ENCODE measurements at regions of chr3 and their contacts with region 1.

Region 1: DNA sequence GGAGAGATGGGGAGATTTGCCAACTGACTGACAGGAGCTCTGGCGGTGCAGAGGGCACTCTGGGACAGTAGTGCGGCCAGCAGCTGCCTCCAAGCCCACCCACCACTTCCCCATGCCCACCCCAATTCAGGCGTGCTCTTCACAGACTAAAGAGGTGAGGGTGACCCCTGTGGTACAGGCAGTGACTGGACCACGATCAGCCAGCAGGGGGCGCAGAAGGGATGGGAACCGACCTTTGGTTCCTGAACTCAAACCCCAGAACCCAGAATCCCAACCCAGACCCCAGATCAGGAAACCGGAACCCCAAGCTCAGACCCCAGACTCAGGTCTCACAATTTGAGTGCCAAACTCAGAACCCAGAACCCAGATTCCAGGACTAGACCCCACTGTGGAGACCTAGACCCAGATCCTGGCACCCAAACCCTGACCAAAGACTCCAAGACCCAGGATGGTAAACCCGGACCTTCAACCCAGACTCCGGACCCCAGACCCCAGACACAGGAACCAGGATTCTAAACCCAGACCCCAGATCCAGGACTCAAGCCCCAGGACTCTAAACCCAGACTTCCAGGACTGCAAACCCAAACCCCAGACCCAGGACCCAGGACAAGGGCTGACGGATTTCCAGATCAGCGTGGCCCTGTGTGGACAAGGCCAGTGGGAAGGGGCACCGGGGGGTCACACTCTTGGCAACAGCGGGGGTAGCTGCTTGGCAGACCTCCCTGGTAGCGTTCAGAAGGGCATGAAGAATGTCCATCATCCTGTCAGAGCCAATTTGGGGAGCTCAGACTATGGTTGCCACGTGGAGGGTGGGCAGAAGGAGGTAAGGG is 3.7 kb upstream of the MYL3 start:
- DNase-seq: peak; percentile 88 to 98
- ATAC-seq: peak; percentile 84
- H3K4me3 ChIP-seq: no peak overlapping the region
- H3K27ac ChIP-seq: no peak overlapping the region
- H3K4me1 ChIP-seq: peaks cover 0 to 2% of the 10 kb centered on the region in 2 donors
- H3K27me3 ChIP-seq: no peaks in the 10 kb centered on the region

Region 2: DNA sequence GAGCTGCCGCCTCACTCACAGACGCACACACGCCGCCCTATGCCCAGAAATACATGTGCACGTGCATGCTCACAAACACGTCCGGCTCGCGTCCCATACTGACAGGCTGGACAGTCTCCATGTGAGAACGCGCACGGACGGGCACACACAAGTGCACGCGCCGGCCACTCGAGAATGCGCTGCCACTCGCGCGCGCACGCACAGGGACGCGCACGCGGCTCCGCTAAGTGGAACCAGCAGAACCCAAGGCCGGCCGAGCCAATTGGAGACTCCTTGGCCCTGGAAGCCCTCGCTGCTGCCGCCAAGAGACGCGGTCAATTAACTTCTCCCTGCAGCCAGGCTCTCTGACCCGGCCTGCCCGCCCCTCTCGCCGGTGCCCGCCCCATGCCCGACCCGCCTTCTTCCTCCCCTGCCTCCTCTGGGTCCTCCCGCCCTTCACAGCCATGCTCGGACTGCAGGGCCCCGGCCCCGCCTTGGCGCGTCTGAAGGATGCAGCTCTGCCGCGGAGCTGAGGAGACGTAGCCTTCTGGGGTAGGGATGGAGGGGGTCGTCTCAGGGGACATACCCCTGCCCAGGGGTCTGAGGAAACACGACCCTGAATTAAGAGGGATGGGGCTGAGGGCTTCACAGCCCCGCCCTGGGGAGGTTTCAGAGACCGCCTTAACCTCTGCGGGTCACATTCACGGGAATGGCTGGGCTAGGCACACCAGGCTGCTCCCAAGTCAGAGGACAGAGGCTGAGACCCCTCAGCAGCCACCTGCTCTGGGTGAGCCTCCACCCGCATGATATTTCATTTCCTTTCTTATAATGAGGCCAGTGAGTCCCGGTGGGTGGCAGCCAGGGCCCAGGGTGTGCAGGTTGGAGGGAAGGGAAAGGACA is 25.6 kb after region 1 on chr3:
- intact Hi-C with region 1: loop called in 1 of 2 experiments (anchors 2 kb)
- DNase-seq: peak; percentile 92 to 94
- ATAC-seq: peak; percentile 86
- H3K4me3 ChIP-seq: no peak overlapping the region
- H3K27ac ChIP-seq: no peak overlapping the region
- H3K4me1 ChIP-seq: no peaks in the 10 kb centered on the region
- H3K27me3 ChIP-seq: no peaks in the 10 kb centered on the region

Region 3: GRCh38 chr3:46909535-46910442 is 42.9 kb after region 1 on chr3:
- intact Hi-C with region 1: loop called (anchors 2 to 5 kb)
- DNase-seq: peak; percentile 92 to 94
- ATAC-seq: peak; percentile 77
- H3K4me3 ChIP-seq: no peak overlapping the region
- H3K27ac ChIP-seq: no peak overlapping the region
- H3K4me1 ChIP-seq: no peaks in the 10 kb centered on the region
- H3K27me3 ChIP-seq: no peaks in the 10 kb centered on the region

Region 4: GRCh38 chr3:46965151-46965550 is 98.2 kb after region 1 on chr3:
- intact Hi-C with region 1: no loop called
- DNase-seq: no peak
- ATAC-seq: no peak
- H3K4me3 ChIP-seq: no peak overlapping the region
- H3K27ac ChIP-seq: no peak overlapping the region
- H3K4me1 ChIP-seq: peaks cover 0 to 3% of the 10 kb centered on the region in 2 donors
- H3K27me3 ChIP-seq: no peaks in the 10 kb centered on the region

Region 5: DNA sequence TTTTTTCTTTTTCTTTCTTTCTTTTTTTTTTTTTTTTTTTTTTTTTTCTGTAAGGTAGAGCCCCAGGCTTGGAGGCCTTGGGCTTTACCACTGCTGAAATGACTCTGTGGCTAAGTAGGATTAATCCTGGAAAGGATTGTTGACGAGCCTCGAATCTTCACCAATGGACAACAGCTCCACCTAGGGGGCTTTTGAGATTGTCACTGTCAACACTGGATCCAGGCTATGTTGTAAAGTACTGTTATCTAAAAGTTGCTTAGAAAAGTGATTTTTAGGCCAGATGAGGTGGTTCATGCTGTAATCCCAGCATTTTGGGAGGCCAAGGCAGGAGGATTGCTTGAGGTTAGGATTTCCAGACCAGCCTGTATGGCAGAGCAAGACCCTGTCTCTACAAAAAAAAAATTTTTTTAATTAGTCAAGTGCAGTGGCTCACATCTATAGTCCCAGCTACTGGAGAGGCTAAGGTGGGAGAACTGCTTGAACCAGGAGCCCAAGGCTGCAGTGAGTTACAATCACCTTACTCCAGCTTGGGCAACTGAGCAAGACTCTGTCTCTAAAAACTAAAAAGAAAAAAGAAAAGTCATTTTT is 457.4 kb after region 1 on chr3:
- intact Hi-C with region 1: loop called in 1 of 2 experiments (anchors 10 kb)
- DNase-seq: peak in 1 of 2 donors; percentile 51
- ATAC-seq: peak; percentile 91
- H3K4me3 ChIP-seq: no peak overlapping the region
- H3K27ac ChIP-seq: no peak overlapping the region
- H3K4me1 ChIP-seq: no peaks in the 10 kb centered on the region
- H3K27me3 ChIP-seq: no peaks in the 10 kb centered on the region